ENCODE measurements at regions of chr1 and their contacts with region 1.

Region 1: GRCh38 chr1:66929999-66930822 is 5.4 kb downstream of the MIER1 start:
- DNase-seq: peak; percentile 95
- H3K4me3 Mint-ChIP-seq: peak overlapping the region; percentile 82
- H3K27ac Mint-ChIP-seq: peak overlapping the region; percentile 77
- H3K4me1 Mint-ChIP-seq: peaks cover 62% of the 10 kb centered on the region
- H3K27me3 Mint-ChIP-seq: no peaks in the 10 kb centered on the region

Region 2: DNA sequence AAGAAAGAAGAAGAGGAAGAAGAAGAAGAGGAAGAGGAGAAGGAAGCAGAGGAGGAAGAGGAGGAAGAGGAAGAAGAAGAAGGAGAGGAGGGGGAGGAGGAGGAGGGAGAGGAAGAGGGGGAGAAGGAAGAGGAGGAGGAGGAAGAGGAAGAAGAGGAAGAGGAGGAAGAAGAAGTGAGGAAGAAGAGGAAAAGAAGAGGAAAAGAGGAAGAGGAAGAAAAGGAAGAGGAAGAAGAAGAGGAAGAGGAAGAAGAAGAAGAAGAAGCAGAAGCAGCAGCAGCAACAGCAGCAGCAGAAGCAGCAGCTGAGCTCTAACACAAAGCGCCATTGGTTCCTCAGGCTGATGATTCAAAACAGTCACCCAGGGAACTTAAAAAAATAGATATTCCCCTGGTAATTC is 39.6 kb before region 1 on chr1:
- CTCF ChIA-PET with region 1: no interaction called
- POLR2A ChIA-PET with region 1: no interaction called
- DNase-seq: no peak
- H3K4me3 Mint-ChIP-seq: no peak overlapping the region
- H3K27ac Mint-ChIP-seq: no peak overlapping the region
- H3K4me1 Mint-ChIP-seq: no peaks in the 10 kb centered on the region
- H3K27me3 Mint-ChIP-seq: no peaks in the 10 kb centered on the region

Region 3: DNA sequence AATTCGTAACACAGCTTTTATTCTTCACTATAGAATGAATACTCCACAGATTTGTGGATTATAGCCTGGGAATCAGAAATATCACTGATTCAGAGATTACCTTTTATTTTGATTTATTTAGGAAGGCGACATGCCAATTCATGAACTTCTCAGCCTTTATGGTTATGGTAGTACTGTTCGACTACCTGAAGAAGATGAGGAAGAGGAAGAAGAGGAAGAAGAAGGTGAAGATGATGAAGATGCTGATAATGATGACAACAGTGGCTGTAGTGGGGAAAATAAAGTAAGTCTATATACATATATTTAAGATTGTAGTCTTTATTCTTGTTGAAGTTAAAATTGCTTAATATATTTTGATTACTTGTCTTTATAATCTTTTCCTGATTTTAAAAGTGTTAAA is 27.7 kb after region 1 on chr1:
- CTCF ChIA-PET with region 1: interaction called, 3 read pairs
- POLR2A ChIA-PET with region 1: interaction called, 12 read pairs
- DNase-seq: no peak
- H3K4me3 Mint-ChIP-seq: no peak overlapping the region
- H3K27ac Mint-ChIP-seq: no peak overlapping the region
- H3K4me1 Mint-ChIP-seq: peaks cover 31% of the 10 kb centered on the region
- H3K27me3 Mint-ChIP-seq: no peaks in the 10 kb centered on the region

Region 4: GRCh38 chr1:66968574-66968973 is 38.4 kb after region 1 on chr1:
- CTCF ChIA-PET with region 1: no interaction called
- POLR2A ChIA-PET with region 1: no interaction called
- DNase-seq: no peak
- H3K4me3 Mint-ChIP-seq: no peak overlapping the region
- H3K27ac Mint-ChIP-seq: no peak overlapping the region
- H3K4me1 Mint-ChIP-seq: peaks cover 20% of the 10 kb centered on the region
- H3K27me3 Mint-ChIP-seq: no peaks in the 10 kb centered on the region

Measured in activated CD4-positive, alpha-beta memory T cell treated with anti-CD3 and anti-CD28 coated beads, Interleukin-2, amount 10 ng/mL, durations not matched to agents 7 days and 5 days (primary cell).